Calu3 (cell line): ENCODE measurements at regions of chr4 and their contacts with region 1.

Region 1: DNA sequence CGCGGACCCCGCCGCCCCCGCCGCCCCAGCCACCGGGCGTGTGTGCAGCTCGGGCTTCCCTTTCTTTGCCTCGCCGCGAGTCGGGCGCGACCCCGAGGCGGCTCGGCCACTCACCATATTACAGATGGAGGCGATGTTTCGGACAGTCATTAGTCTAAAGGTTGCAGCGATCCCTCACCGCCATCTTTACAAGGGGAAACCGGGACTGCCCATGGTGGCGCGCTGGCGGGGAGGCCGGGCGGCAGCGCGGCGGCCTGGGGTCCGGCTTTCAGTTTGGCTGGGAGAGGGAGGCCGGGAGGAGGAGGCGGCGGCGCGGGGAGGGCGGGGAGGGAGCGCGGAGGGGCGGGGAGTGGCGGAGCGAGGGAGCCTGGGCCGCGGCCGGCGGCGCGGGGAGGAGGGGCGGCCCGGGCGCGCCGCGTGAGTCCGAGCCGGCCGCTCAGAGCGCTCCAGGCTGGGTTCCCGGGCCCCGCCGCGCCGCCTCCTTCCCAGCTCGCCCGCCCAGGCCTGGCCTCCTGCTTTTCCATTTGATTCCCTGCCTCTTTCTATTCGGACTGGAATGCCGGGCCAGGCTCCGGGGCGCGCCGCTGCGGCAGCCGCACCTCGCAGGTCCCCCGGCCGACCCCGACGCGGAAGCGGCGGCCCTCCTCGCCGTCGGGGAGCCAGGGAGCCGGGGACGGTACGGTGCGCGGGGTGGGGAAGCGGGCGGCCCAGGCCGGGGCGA is at the start of gene USP46:
- DNase-seq: peak; percentile 58
- H3K4me3 Mint-ChIP-seq: peak within 1 kb of the TSS; percentile 73
- H3K27ac Mint-ChIP-seq: no peak within 1 kb of the TSS
- H3K4me1 Mint-ChIP-seq: peaks cover 9% of the 10 kb centered on the region
- H3K27me3 Mint-ChIP-seq: no peaks in the 10 kb centered on the region
- CTCF ChIP-seq: no peak
- total RNA-seq, gene USP46: 12.5 and 15.4 TPM in 2 replicates

Region 2: GRCh38 chr4:52477191-52477780 is 181.9 kb before region 1 on chr4:
- CTCF ChIA-PET with region 1: no interaction called
- intact Hi-C with region 1: no loop called
- DNase-seq: no peak
- H3K4me3 Mint-ChIP-seq: no peak overlapping the region
- H3K27ac Mint-ChIP-seq: no peak overlapping the region
- H3K4me1 Mint-ChIP-seq: no peaks in the 10 kb centered on the region
- H3K27me3 Mint-ChIP-seq: peaks cover 14% of the 10 kb centered on the region
- CTCF ChIP-seq: no peak

Region 3: DNA sequence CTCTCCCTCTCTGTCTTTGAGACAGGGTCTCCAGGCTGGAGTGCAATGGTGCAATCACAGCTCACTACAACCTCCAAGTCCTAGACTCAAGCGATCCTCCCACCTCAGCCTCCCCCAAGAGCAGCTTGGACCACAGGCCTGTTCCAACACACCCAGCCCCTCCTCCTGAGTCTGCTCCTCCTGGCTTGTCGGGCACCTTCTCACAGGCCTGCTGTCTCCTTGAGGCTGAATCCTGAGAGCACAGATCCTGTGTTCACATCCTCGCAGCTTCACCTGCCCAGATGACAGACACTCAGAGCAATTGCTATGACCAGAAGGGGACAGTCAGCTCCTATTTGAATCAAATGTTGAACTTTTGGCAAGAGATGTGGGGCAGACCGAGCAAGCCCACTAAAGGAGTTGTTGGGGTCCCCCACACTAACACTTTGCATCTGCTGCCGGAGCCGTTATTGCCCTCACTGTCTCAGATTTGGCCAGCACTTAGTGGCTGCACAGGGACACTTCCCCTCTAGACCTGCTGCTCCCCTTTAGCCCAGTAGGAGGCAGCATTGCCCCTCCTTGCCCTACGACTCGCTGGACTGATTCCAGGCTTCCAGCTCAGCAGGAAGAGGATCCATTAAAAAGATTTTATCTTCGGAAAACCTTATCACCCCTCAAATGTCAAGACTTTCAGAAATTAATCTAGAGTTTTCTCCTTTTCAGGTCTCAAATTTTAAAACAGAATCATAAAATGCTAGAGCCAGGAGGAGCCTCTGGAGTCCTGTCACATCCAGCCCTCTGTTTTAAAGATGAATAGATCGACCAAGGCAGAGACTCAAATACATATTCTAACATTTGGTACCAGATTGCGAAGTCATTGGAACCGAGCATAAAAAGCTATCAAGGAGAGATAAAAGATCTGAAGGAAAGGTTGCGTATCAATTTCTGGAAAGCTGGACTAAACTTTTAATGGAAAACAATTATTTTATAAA is 113.8 kb before region 1 on chr4:
- CTCF ChIA-PET with region 1: no interaction called
- intact Hi-C with region 1: loop called (anchors 10 kb)
- DNase-seq: peak; percentile 74
- H3K4me3 Mint-ChIP-seq: no peak overlapping the region
- H3K27ac Mint-ChIP-seq: no peak overlapping the region
- H3K4me1 Mint-ChIP-seq: no peaks in the 10 kb centered on the region
- H3K27me3 Mint-ChIP-seq: no peaks in the 10 kb centered on the region
- CTCF ChIP-seq: peak; percentile 82

Region 4: DNA sequence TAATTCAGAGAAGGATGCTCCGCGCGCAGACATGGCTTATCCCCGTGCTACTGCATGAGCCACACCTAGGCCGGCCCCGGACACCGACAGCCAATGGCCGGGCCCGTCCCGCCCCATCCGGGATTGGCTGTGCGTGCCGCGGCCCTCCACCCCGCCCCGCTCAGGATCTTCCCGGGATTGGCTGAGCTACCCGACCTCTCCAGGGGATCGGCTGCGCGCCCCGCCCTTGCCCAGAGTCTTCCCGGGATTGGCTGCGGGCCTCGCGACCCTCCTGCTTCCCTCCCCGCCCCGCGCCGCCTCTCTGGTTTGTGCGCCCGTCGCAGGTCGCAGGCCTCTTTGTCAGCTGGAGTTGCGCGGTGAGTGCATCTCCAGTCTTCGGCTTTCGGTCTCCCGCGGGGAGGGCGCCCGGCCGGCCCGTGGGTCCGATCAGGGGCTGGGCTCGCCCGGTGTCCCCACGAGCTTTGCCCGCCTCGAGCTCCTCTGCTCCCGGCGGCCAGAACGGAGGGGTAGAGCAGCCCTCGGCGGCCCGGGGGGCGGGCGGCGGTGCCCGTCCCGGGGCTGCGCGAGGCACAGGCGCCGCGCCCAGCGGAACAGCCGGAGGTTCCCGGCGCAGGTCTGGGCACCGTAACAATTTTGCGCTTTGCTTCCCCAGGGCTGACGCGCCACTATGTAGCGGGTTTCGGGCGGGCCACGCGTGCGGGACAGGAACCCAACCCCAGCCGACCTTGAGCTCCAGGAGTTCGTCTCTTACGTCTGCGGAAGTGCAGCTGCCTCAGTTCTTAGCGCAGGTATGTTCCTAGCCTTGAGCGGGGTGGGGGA is 53.2 kb after region 1 on chr4:
- CTCF ChIA-PET with region 1: interaction called, 4 read pairs
- intact Hi-C with region 1: loop called (anchors 10 kb)
- DNase-seq: peak; percentile 96
- H3K4me3 Mint-ChIP-seq: peak overlapping the region; percentile 75
- H3K27ac Mint-ChIP-seq: peak overlapping the region; percentile 86
- H3K4me1 Mint-ChIP-seq: peaks cover 30% of the 10 kb centered on the region
- H3K27me3 Mint-ChIP-seq: no peaks in the 10 kb centered on the region
- CTCF ChIP-seq: no peak

Region 5: GRCh38 chr4:52894443-52894842 is 235.3 kb after region 1 on chr4:
- CTCF ChIA-PET with region 1: no interaction called
- intact Hi-C with region 1: no loop called
- DNase-seq: no peak
- H3K4me3 Mint-ChIP-seq: no peak overlapping the region
- H3K27ac Mint-ChIP-seq: no peak overlapping the region
- H3K4me1 Mint-ChIP-seq: no peaks in the 10 kb centered on the region
- H3K27me3 Mint-ChIP-seq: no peaks in the 10 kb centered on the region
- CTCF ChIP-seq: no peak